H1 (cell line): ENCODE measurements at regions of chr10 and their contacts with region 1.

Region 1: DNA sequence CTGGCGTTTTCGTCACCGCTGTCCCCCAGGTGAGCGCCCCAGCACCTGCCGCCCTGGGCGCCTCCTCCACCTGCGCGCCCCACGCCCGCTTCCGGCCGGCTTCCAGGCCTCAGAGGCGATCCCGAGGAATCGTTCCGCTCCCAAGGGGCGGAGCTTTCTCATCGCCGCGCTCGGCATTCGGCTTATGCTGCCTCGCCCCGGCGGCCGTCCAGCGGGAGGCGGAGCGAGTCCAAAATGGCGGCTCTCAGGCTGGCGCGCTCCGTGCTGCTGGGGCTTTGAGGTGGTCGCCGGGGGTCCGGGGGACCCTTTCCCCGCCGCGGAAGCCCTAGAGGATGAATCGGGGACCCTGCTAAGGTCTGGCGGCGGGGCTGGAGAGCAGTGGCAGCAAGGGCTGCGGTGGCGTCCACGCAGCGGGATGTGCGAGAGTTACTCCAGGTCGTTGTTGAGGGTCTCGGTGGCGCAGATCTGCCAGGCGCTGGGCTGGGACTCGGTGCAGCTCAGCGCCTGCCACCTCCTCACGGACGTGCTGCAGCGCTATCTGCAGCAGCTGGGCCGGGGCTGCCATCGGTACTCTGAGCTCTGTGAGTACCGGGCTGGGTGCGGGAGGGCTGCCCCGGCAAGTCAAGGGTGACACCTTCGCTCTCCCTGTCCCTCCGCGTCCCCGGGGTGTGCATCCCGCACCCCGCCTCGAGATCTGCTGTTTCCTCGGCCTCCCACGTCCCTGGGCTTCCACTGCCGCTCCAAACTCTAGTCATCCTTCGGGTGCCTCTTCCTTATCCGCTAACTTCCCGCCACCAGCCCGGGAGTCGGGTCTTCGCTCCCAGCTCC is at the start of gene TAF3:
- DNase-seq: peak; percentile 61 to 96
- H3K4me3 ChIP-seq: peak within 1 kb of the TSS; percentile 74 to 100 (median 100)
- H3K27ac ChIP-seq: peak within 1 kb of the TSS; percentile 76; the same call in 1 of the 2 replicates
- H3K4me1 ChIP-seq: peaks cover 0 to 7% (median 2%) of the 10 kb centered on the region in 4 experiments; a peak in 3 of 7 replicates
- H3K27me3 ChIP-seq: no peaks in the 10 kb centered on the region
- CTCF ChIP-seq: no peak
- EP300 ChIP-seq: no peak; a peak in 1 of 3 replicates
- POLR2A ChIP-seq: peak; percentile 84 to 92
- RAD21 ChIP-seq: no peak
- total RNA-seq, gene TAF3: 10.7 and 11.2 TPM in 2 replicates

Region 2: GRCh38 chr10:7787857-7788638 is 30.5 kb before region 1 on chr10 and contains the starts of genes ATP5F1C and KIN:
- CTCF ChIA-PET with region 1: interaction called, 4 read pairs
- POLR2A ChIA-PET with region 1: interaction called, 28 read pairs
- DNase-seq: peak; percentile 93 to 98
- H3K4me3 ChIP-seq: peak within 1 kb of the TSS; percentile 77 to 98 (median 92)
- H3K27ac ChIP-seq: peak within 1 kb of the TSS; percentile 66
- H3K4me1 ChIP-seq: peaks cover 0 to 5% (median 1%) of the 10 kb centered on the region in 4 experiments; a peak in 4 of 7 replicates
- H3K27me3 ChIP-seq: no peaks in the 10 kb centered on the region
- CTCF ChIP-seq: no peak; a peak in 1 of 4 replicates
- EP300 ChIP-seq: no peak
- POLR2A ChIP-seq: peak in 1 of 2 experiments; percentile 81; a peak in 2 of 3 replicates
- RAD21 ChIP-seq: no peak
- total RNA-seq, gene ATP5F1C: 265 and 272 TPM in 2 replicates
- total RNA-seq, gene KIN: 16.5 and 18.9 TPM in 2 replicates